Activated CD4-positive, alpha-beta T cell treated with anti-CD3 and anti-CD28 coated beads, Interleukin-2, amount 10 ng/mL, durations not matched to agents 7 days and 5 days (primary cell): ENCODE measurements at regions of chr15 and their contacts with region 1.

Region 1: DNA sequence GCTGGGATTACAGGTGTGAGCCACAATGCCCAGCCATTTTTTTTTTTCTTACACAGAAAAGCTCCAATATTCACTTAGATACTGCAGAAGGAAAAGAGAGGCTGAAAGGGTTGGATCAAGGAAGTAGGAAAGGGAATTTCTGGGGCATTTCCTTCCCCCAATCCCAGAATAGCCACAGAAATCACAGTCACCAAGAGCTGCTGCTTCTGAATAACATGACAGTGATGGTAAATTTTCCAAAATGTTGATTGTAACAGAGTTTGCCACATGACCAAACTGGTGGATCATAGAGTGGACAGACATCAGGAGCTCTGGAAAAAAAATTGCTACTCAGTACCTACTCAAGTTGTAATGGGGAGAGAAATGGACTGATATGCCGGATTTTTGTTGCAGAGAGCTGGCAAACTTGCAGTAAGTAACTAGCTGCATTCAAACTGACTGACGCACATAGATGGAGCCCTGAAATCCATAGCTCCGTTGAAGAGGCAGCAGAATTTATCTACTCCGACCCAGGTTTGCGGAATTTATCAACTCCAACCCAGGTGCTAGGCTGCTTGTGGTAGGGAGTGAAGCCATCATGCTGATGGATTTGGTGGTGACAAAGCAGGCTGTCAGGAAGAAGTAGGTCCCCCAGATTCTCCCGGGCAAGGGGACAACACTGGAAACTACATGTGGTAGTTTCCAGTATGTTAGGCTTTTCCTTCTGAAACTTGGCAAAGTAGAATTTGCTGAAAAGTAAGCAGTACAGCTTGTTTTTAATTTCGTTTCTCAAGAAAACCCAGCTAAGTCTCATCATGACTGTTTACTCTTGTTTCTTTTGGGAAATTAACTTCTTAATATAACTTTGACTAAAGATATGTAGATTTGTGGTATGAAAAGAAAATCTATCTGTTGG is 10.5 kb upstream of the ADPGK start:
- DNase-seq: no peak
- H3K4me3 Mint-ChIP-seq: no peak overlapping the region
- H3K27ac Mint-ChIP-seq: no peak overlapping the region
- H3K4me1 Mint-ChIP-seq: peaks cover 18% of the 10 kb centered on the region
- H3K27me3 Mint-ChIP-seq: peaks cover 21% of the 10 kb centered on the region

Region 2: GRCh38 chr15:72671535-72671934 is 122.5 kb before region 1 on chr15:
- CTCF ChIA-PET with region 1: no interaction called
- POLR2A ChIA-PET with region 1: no interaction called
- DNase-seq: no peak
- H3K4me3 Mint-ChIP-seq: no peak overlapping the region
- H3K27ac Mint-ChIP-seq: no peak overlapping the region
- H3K4me1 Mint-ChIP-seq: peaks cover 8% of the 10 kb centered on the region
- H3K27me3 Mint-ChIP-seq: peaks cover 10% of the 10 kb centered on the region

Region 3: DNA sequence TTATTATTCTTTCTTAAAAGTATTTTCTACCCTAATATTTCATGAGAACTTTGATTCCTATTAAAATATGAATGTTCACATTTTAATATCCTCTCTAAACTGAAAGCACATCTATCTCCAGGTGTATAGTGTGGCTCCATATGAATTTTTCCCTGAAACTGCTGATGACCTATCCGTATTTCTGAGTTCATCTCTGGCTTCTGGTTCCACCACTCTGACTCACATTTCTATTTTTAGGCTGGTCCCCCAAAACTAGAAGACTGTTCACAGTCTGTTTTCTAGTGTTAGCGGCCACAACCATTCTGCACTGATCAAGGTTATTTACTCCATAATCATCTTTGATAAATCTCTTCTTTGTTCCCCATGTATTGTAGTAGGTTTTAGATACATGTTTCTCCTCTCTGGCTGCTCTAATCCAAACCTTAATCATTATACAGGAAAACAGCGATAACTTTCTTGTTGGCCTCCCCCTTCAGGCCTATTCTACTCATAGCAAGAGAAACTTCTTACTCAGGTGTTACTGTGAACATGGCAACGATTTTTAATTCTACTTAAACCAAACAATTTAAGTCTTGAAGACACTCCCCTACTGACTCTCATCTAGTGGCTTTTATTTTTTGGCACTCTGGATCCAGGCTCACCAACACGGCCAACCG is 23.2 kb before region 1 on chr15:
- CTCF ChIA-PET with region 1: no interaction called
- POLR2A ChIA-PET with region 1: no interaction called
- DNase-seq: no peak
- H3K4me3 Mint-ChIP-seq: no peak overlapping the region
- H3K27ac Mint-ChIP-seq: no peak overlapping the region
- H3K4me1 Mint-ChIP-seq: peaks cover 26% of the 10 kb centered on the region
- H3K27me3 Mint-ChIP-seq: no peaks in the 10 kb centered on the region

Region 4: GRCh38 chr15:73156431-73157191 is 362.6 kb after region 1 on chr15:
- CTCF ChIA-PET with region 1: no interaction called
- POLR2A ChIA-PET with region 1: interaction called, 12 read pairs
- DNase-seq: no peak
- H3K4me3 Mint-ChIP-seq: no peak overlapping the region
- H3K27ac Mint-ChIP-seq: no peak overlapping the region
- H3K4me1 Mint-ChIP-seq: peaks cover 5% of the 10 kb centered on the region
- H3K27me3 Mint-ChIP-seq: peaks cover 2% of the 10 kb centered on the region